ENCODE measurements at regions of chr1 and their contacts with region 1.

Region 1: GRCh38 chr1:95043141-95043980 is 29.4 kb downstream of the ALG14 start:
- DNase-seq: peak; percentile 74 to 77
- H3K4me3 ChIP-seq: no peak overlapping the region
- H3K27ac ChIP-seq: no peak overlapping the region
- H3K4me1 ChIP-seq: peaks cover 32% of the 10 kb centered on the region
- H3K27me3 ChIP-seq: no peaks in the 10 kb centered on the region
- CTCF ChIP-seq: peak; percentile 100

Region 2: DNA sequence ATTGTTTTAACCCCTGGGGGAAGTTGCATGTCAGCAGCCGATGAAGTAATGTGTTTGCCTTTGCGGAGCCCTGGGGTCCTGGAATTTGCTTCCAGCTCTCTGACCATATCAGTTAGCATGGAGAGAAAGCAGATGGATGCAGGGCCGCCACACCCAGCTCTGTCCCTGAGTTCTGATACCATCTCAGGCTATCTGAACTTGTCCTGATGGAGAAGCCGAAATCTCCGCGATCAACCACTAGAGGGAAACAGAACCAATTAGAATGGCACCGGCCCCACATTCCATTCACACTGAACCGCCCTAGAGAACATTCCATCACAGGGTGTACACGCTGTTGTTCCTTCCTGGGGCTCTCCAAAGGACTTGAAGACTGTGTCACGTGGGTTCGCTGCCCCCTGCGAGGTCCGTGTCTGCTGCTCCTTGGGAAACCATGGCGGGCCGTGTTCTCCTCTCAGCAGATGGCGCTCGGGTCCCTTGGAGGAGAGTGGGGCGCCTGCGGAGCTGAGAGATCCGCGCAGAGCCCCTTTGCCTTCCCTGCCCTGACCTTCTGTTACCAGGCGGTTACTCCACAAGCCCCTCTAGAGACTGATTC is 997.8 kb before region 1 on chr1:
- CTCF ChIA-PET with region 1: no interaction called
- POLR2A ChIA-PET with region 1: no interaction called
- intact Hi-C with region 1: loop called (anchors 2 kb)
- DNase-seq: peak; percentile 92 to 97
- H3K4me3 ChIP-seq: no peak overlapping the region
- H3K27ac ChIP-seq: peak overlapping the region; percentile 28
- H3K4me1 ChIP-seq: peaks cover 30% of the 10 kb centered on the region
- H3K27me3 ChIP-seq: no peaks in the 10 kb centered on the region
- CTCF ChIP-seq: peak; percentile 90

Region 3: DNA sequence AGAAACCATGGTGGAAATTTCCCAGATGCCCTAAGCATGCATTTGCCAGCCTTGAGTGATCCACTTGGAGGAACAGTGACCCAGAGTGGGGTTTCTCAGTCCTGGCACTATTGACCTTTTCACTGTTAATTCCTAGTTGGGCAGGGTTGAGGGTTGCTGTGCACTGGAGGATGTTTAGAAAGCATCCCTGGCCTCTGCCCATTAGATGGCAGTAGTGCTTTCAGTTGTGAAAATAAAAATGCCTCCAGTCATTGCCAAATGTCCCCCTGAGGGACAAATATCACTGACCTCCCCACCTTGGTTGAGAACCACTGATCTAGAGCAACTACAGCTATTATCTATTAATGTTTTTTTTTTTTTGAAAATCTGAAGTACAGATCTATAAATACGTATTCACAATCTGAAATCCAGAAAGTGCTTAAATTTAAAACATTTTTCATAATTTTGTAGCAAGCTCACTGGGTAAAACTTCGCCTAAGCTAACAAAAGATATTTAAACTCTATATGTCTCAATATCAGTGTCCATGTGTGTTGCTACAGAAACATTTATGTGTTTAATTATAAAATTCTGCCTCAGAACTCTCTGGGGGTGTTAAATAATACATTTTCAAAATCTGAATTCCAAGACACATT is 529.1 kb before region 1 on chr1:
- CTCF ChIA-PET with region 1: interaction called, 3 read pairs
- POLR2A ChIA-PET with region 1: no interaction called
- intact Hi-C with region 1: loop called (anchors 1 kb)
- DNase-seq: peak; percentile 34 to 66
- H3K4me3 ChIP-seq: no peak overlapping the region
- H3K27ac ChIP-seq: peak overlapping the region; percentile 21; the same call in 1 of the 2 replicates
- H3K4me1 ChIP-seq: peaks cover 11% of the 10 kb centered on the region
- H3K27me3 ChIP-seq: no peaks in the 10 kb centered on the region
- CTCF ChIP-seq: peak; percentile 91

Region 4: GRCh38 chr1:94532077-94532476 is 511.3 kb before region 1 on chr1:
- CTCF ChIA-PET with region 1: no interaction called
- POLR2A ChIA-PET with region 1: no interaction called
- intact Hi-C with region 1: no loop called
- DNase-seq: peak; percentile 60
- H3K4me3 ChIP-seq: no peak overlapping the region
- H3K27ac ChIP-seq: peak overlapping the region; percentile 87
- H3K4me1 ChIP-seq: peaks cover 94% of the 10 kb centered on the region
- H3K27me3 ChIP-seq: no peaks in the 10 kb centered on the region
- CTCF ChIP-seq: peak; percentile 56

Region 5: GRCh38 chr1:94727846-94728715 is 315.3 kb before region 1 on chr1:
- CTCF ChIA-PET with region 1: no interaction called
- POLR2A ChIA-PET with region 1: no interaction called
- intact Hi-C with region 1: loop called (anchors 5 kb)
- DNase-seq: peak; percentile 83 to 100
- H3K4me3 ChIP-seq: peak overlapping the region; percentile 1; the same call in 1 of the 2 replicates
- H3K27ac ChIP-seq: peak overlapping the region; percentile 85
- H3K4me1 ChIP-seq: peaks cover 44% of the 10 kb centered on the region
- H3K27me3 ChIP-seq: no peaks in the 10 kb centered on the region
- CTCF ChIP-seq: no peak

Region 6: DNA sequence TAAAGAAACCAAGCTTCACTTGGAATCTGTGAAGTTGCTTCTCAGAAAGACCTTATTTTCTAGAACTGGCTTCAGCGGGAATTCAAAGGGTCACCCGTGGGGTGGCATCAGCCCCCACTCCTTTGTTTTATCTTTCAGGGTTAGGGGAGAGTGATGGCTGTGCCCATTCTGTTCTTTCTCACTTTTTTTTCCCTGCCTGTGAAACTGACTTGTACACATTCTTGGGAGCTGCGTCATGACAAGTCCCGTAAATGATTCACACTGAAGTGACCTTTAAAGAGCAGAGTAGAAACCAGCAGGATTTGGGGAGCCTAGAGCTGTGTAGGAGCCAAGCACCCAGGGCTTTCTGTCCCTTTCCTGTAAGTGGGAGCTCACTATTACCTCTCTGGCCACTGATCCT is 179.4 kb before region 1 on chr1:
- CTCF ChIA-PET with region 1: interaction called, 23 read pairs
- POLR2A ChIA-PET with region 1: no interaction called
- intact Hi-C with region 1: no loop called
- DNase-seq: peak; percentile 65 to 96
- H3K4me3 ChIP-seq: peak overlapping the region; percentile 36
- H3K27ac ChIP-seq: peak overlapping the region; percentile 96
- H3K4me1 ChIP-seq: peaks cover 50% of the 10 kb centered on the region
- H3K27me3 ChIP-seq: no peaks in the 10 kb centered on the region
- CTCF ChIP-seq: no peak

Region 7: DNA sequence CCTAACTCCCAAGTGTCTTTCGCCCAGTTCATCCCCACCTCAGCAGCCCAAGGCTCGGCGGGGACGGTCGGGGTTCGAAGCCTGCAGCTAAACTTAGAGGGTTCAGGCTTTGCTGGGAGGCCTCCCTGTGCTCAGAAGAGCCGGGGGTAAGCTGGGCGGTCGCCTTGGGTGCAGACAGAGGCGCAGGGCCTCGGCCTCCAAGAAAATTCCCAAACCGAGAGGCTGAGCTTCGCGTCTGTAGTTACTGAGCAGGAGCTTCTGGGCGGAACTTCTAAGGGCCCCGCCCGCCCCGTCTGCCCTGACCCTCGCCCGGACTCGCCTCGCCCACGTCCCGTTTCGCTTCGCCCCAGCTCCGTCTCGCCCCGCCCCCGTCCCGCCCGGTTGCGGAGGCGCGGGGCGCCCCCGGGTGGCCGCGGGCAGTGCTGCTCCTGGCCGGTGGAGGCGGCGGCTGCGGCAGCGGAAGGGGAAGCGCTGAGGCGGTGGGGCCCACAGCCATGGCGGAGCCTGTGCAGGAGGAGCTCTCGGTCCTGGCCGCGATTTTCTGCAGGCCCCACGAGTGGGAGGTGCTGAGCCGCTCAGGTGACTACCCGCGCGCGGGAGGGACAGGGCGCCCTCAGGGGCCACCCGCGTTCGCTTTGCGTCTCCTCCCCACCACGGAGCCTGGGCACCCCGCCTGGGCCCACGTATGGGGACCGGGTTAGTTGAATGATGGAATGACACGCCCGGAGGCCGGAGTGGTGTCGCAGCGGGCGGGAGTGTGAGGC is 190.6 kb after region 1 on chr1 and contains the start of gene RWDD3:
- CTCF ChIA-PET with region 1: interaction called, 9 read pairs
- POLR2A ChIA-PET with region 1: no interaction called
- intact Hi-C with region 1: loop called (anchors 1 kb)
- DNase-seq: peak; percentile 79 to 94
- H3K4me3 ChIP-seq: peak within 1 kb of the TSS; percentile 94
- H3K27ac ChIP-seq: 0 out of 2 replicates have a peak within 1 kb of the TSS, but pooled peaks have one; percentile 8
- H3K4me1 ChIP-seq: peaks cover 8% of the 10 kb centered on the region; the same call in 1 of the 2 replicates
- H3K27me3 ChIP-seq: no peaks in the 10 kb centered on the region
- CTCF ChIP-seq: peak; percentile 88
- total RNA-seq, gene RWDD3: 11.3 and 13.3 TPM in 2 replicates

Region 8: GRCh38 chr1:95278173-95279006 is 235.0 kb after region 1 on chr1:
- CTCF ChIA-PET with region 1: no interaction called
- POLR2A ChIA-PET with region 1: no interaction called
- intact Hi-C with region 1: no loop called
- DNase-seq: no peak
- H3K4me3 ChIP-seq: no peak overlapping the region
- H3K27ac ChIP-seq: no peak overlapping the region
- H3K4me1 ChIP-seq: no peaks in the 10 kb centered on the region
- H3K27me3 ChIP-seq: no peaks in the 10 kb centered on the region
- CTCF ChIP-seq: no peak

Measured in PC-9 (cell line).